ENCODE measurements at regions of chr4 and their contacts with region 1.

Region 1: GRCh38 chr4:169619959-169620879 is at the start of gene CLCN3:
- DNase-seq: peak; percentile 97 to 99
- ATAC-seq: peak; percentile 98 to 100 (median 99)
- H3K4me3 ChIP-seq: peak within 1 kb of the TSS; percentile 68 to 85 (median 72)
- H3K27ac ChIP-seq: peak within 1 kb of the TSS; percentile 80 to 96 (median 94)
- H3K4me1 ChIP-seq: peaks cover 0 to 45% (median 29%) of the 10 kb centered on the region in 9 donors
- H3K27me3 ChIP-seq: no peaks in the 10 kb centered on the region
- CTCF ChIP-seq: peak in 4 of 9 donors; percentile 21 to 47 (median 34)
- total RNA-seq, gene CLCN3: 53.4 to 94.9 (median 65.2) TPM

Region 2: DNA sequence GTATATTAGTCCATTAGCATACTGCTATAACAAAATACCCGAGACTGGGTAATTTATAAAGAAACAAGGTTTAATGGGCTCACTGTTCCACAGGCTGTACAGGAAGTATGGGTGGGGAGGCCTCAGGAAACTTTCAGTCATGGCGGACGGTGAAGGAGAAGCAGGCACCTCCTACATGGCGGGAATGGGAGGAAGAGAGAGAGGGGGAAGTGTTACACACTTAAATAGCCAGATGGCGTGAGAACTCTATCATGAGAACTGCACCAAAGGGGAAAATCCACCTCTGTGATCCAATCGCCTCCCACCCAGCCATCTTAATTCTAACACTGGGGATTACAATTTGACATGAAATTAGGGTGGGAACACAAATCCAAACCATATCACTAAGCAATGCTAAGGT is 250.6 kb before region 1 on chr4:
- intact Hi-C with region 1: no loop called
- DNase-seq: no peak
- ATAC-seq: no peak
- H3K4me3 ChIP-seq: no peak overlapping the region
- H3K27ac ChIP-seq: no peak overlapping the region
- H3K4me1 ChIP-seq: no peaks in the 10 kb centered on the region
- H3K27me3 ChIP-seq: no peaks in the 10 kb centered on the region
- CTCF ChIP-seq: no peak

Region 3: DNA sequence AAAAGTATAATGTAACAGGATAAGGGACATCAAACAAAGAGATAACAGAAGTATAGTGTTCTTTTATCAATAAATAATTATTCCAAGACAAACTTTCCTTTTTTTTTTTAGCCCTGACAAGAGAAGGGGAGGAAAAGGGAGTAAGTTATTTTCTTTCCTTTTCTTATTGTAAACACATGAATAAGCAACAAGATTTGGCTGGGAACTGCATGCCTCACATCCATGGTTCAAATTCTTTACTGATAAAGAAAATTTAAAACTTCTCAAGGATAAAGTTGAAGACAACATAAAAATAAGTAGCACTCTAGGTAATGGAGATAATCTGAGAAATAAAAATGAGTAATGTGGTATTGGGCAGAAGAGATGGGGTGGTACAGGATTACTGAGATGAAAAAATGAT is 79.4 kb before region 1 on chr4:
- intact Hi-C with region 1: no loop called
- DNase-seq: no peak
- ATAC-seq: no peak
- H3K4me3 ChIP-seq: no peak overlapping the region
- H3K27ac ChIP-seq: no peak overlapping the region
- H3K4me1 ChIP-seq: no peaks in the 10 kb centered on the region
- H3K27me3 ChIP-seq: no peaks in the 10 kb centered on the region
- CTCF ChIP-seq: no peak

Region 4: DNA sequence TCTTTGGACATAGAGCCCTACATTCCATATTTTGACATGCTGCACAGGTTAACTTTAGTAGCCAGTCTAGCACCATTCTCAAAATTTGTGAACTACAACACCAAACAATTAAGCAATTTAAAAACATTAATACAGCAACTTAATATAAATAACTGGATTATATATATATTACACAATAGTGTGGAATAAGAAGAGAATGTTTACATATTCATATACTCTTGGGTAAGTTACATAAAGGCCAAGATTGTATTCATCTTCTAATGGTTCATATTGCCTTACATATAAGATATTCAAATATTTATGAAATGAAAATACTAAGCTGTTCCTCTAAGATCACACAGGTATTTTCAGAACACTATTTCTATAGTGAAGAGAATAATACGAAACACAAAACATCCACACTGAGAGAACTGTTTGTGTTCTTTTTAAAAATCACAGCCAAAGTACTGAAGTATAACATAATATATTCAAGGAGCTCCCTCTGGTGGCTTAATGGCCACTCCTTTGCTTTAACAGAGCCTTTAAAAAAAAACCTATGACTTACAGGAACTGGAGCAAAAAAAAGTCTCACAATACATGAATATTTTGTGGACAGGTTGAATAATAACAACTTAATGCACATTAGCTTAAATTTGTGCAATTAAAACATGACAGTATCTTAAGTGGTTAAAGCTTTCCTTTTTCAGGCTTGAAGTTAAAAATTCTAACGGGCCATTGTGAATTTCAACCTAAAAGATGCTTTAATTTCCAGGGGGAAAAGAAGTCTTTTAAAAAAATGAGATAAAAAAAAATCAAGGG is 54.0 kb before region 1 on chr4:
- intact Hi-C with region 1: no loop called
- DNase-seq: peak in 1 of 2 donors; percentile 62
- ATAC-seq: peak in 7 of 8 donors; percentile 68 to 87 (median 81)
- H3K4me3 ChIP-seq: peak overlapping the region in 1 of 10 donors; percentile 18
- H3K27ac ChIP-seq: peak overlapping the region in 1 of 10 donors; percentile 18
- H3K4me1 ChIP-seq: peaks cover 0 to 17% (median 11%) of the 10 kb centered on the region in 9 donors
- H3K27me3 ChIP-seq: no peaks in the 10 kb centered on the region
- CTCF ChIP-seq: peak; percentile 43 to 86 (median 75)

Region 5: DNA sequence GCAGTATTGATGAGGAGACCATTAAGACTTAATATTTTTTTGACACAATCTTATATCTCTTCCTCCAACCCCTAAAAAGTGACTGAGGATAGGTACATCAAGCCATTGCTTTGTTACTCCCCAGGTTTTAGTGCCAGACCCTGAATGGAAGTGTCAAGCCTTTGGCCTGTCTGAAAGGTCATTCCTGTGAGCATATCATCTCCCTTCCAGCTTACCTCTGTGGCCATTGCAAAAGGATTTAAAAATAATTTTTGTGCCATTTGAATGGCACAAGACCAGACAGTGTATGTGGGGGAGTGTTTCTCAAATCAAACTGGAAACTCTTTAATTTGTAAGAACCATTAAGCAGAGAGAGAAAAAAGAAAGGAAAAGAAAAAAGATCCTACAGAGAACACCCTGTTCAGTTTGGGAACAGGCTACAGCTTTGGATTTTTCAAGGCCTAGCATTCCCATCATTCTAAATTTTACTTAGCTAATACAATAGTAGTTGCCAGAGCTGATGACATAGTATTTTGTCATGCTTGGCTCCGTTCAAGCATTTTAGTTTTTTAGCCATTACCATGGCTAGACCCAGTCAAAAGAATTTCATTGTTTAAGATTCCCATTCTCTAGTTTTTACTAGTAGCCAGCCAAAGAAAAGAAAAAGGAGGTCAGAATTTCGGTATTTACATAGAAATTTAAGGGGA is 87.9 kb after region 1 on chr4:
- intact Hi-C with region 1: loop called in 3 of 10 experiments (anchors 5 to 10 kb)
- DNase-seq: no peak
- ATAC-seq: peak in 5 of 8 donors; percentile 25 to 77 (median 55)
- H3K4me3 ChIP-seq: no peak overlapping the region
- H3K27ac ChIP-seq: peak overlapping the region in 6 of 10 donors; percentile 4 to 54 (median 16)
- H3K4me1 ChIP-seq: peaks cover 0 to 13% (median 9%) of the 10 kb centered on the region in 9 donors
- H3K27me3 ChIP-seq: no peaks in the 10 kb centered on the region
- CTCF ChIP-seq: no peak

Region 6: GRCh38 chr4:169723207-169723965 is 103.2 kb after region 1 on chr4:
- intact Hi-C with region 1: loop called in 2 of 10 experiments (anchors 10 kb)
- DNase-seq: no peak
- ATAC-seq: no peak
- H3K4me3 ChIP-seq: no peak overlapping the region
- H3K27ac ChIP-seq: no peak overlapping the region
- H3K4me1 ChIP-seq: no peaks in the 10 kb centered on the region
- H3K27me3 ChIP-seq: no peaks in the 10 kb centered on the region
- CTCF ChIP-seq: peak in 5 of 9 donors; percentile 10 to 30 (median 14)

Region 7: DNA sequence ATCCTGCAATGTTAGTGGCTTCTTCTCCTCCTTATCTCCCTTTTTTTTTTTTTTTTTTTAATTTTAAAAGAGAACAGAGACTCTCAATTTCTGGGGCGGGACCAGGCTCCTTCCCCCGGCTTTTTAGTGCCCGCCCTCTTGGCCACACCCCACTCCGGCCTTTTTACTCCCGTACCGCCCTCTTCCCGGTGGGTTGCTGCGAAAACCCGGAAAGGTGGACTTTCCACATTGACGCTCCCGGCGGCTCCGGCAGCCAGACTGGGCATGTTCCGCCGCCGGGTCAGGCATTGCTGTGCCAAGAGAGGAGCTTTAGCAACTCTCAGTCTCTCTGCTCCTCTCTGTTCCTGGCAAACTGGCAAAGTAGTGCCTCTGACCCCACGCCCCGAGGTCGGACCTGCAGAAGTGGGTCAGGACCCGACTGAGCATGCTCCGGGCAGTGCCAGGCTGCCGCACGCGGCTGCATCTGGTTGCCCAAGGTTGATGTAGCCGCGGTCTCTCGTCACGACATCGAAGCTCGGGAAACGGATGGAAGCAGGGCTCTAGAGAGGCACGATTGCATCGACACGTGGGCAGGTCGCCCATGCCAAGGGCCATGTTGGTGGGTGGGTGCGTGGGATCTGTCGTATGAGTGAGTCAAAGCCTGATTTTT is 407.1 kb after region 1 on chr4:
- intact Hi-C with region 1: loop called in 3 of 10 experiments (anchors 5 to 10 kb)
- DNase-seq: peak; percentile 93 to 98
- ATAC-seq: peak; percentile 87 to 99 (median 96)
- H3K4me3 ChIP-seq: peak overlapping the region; percentile 50 to 99 (median 88)
- H3K27ac ChIP-seq: peak overlapping the region in 8 of 10 donors; percentile 34 to 93 (median 88)
- H3K4me1 ChIP-seq: peaks cover 0 to 20% (median 12%) of the 10 kb centered on the region in 9 donors
- H3K27me3 ChIP-seq: peaks cover 0 to 36% (median 0%) of the 10 kb centered on the region in 7 donors
- CTCF ChIP-seq: no peak

Measured in heart right ventricle (tissue), 16 donors.